ENCODE measurements at regions of chr5 and their contacts with region 1.

Region 1: GRCh38 chr5:42908509-42909488 is 97.1 kb upstream of the SELENOP start:
- DNase-seq: peak; percentile 50 to 94
- H3K4me3 ChIP-seq: peak overlapping the region; percentile 49 to 63
- H3K27ac ChIP-seq: no peak overlapping the region
- H3K4me1 ChIP-seq: peaks cover 0 to 5% of the 10 kb centered on the region in 2 donors
- H3K27me3 ChIP-seq: no peaks in the 10 kb centered on the region
- CTCF ChIP-seq: peak; percentile 76 to 87 (median 78)

Region 2: GRCh38 chr5:42360056-42360455 is 548.7 kb before region 1 on chr5:
- intact Hi-C with region 1: no loop called
- DNase-seq: no peak
- H3K4me3 ChIP-seq: no peak overlapping the region
- H3K27ac ChIP-seq: no peak overlapping the region
- H3K4me1 ChIP-seq: no peaks in the 10 kb centered on the region
- H3K27me3 ChIP-seq: no peaks in the 10 kb centered on the region
- CTCF ChIP-seq: no peak

Region 3: GRCh38 chr5:42950440-42951292 is 41.9 kb after region 1 on chr5:
- intact Hi-C with region 1: loop called (anchors 2 kb)
- DNase-seq: peak; percentile 53 to 95
- H3K4me3 ChIP-seq: peak overlapping the region; percentile 61 to 88
- H3K27ac ChIP-seq: peak overlapping the region; percentile 96 to 97
- H3K4me1 ChIP-seq: peaks cover 7% of the 10 kb centered on the region in 2 donors
- H3K27me3 ChIP-seq: no peaks in the 10 kb centered on the region
- CTCF ChIP-seq: no peak

Region 4: GRCh38 chr5:43105369-43106289 is 196.8 kb after region 1 on chr5:
- intact Hi-C with region 1: loop called (anchors 1 kb)
- DNase-seq: peak; percentile 61 to 93
- H3K4me3 ChIP-seq: peak overlapping the region; percentile 46 to 54
- H3K27ac ChIP-seq: no peak overlapping the region
- H3K4me1 ChIP-seq: no peaks in the 10 kb centered on the region
- H3K27me3 ChIP-seq: no peaks in the 10 kb centered on the region
- CTCF ChIP-seq: peak; percentile 97 to 99 (median 97)